GM12878 (cell line): ENCODE measurements at regions of chr4 and their contacts with region 1.

Region 1: GRCh38 chr4:169341490-169341889 is 70.7 kb upstream of the SH3RF1 start:
- DNase-seq: peak; percentile 62
- ATAC-seq: peak; percentile 87
- H3K4me3 ChIP-seq: no peak overlapping the region
- H3K27ac ChIP-seq: peak overlapping the region; percentile 23; the same call in 1 of the 2 replicates
- H3K4me1 ChIP-seq: peaks cover 13% of the 10 kb centered on the region
- H3K27me3 ChIP-seq: no peaks in the 10 kb centered on the region
- CTCF ChIP-seq: no peak
- EP300 ChIP-seq: peak in 1 of 2 experiments; percentile 36; a peak in 1 of 4 replicates
- POLR2A ChIP-seq: no peak
- RAD21 ChIP-seq: peak; percentile 35; the same call in 1 of the 2 replicates

Region 2: GRCh38 chr4:169362607-169363006 is 21.1 kb after region 1 on chr4:
- CTCF ChIA-PET with region 1: interaction called, 10 read pairs
- POLR2A ChIA-PET with region 1: interaction called, 3 read pairs
- RAD21 ChIA-PET with region 1: interaction called, 4 read pairs
- SMC1A ChIA-PET with region 1: interaction called, 4 read pairs
- in situ Hi-C with region 1: no loop called
- intact Hi-C with region 1: no loop called
- DNase-seq: no peak
- ATAC-seq: no peak; the same call in 2 of the 3 replicates
- H3K4me3 ChIP-seq: no peak overlapping the region
- H3K27ac ChIP-seq: no peak overlapping the region
- H3K4me1 ChIP-seq: no peaks in the 10 kb centered on the region
- H3K27me3 ChIP-seq: no peaks in the 10 kb centered on the region
- CTCF ChIP-seq: no peak
- EP300 ChIP-seq: no peak
- POLR2A ChIP-seq: no peak
- RAD21 ChIP-seq: no peak

Region 3: GRCh38 chr4:169398316-169398715 is 56.8 kb after region 1 on chr4:
- CTCF ChIA-PET with region 1: interaction called, 3 read pairs
- POLR2A ChIA-PET with region 1: no interaction called
- RAD21 ChIA-PET with region 1: interaction called, 9 read pairs
- SMC1A ChIA-PET with region 1: interaction called, 12 read pairs
- in situ Hi-C with region 1: no loop called
- intact Hi-C with region 1: no loop called
- DNase-seq: no peak
- ATAC-seq: peak; percentile 5; the same call in 2 of the 3 replicates
- H3K4me3 ChIP-seq: no peak overlapping the region
- H3K27ac ChIP-seq: no peak overlapping the region
- H3K4me1 ChIP-seq: peaks cover 13% of the 10 kb centered on the region
- H3K27me3 ChIP-seq: no peaks in the 10 kb centered on the region
- CTCF ChIP-seq: no peak
- EP300 ChIP-seq: no peak
- POLR2A ChIP-seq: no peak
- RAD21 ChIP-seq: no peak

Region 4: GRCh38 chr4:169410839-169411770 is 69.6 kb after region 1 on chr4:
- CTCF ChIA-PET with region 1: no interaction called
- POLR2A ChIA-PET with region 1: interaction called, 5 read pairs
- RAD21 ChIA-PET with region 1: interaction called, 7 read pairs
- SMC1A ChIA-PET with region 1: interaction called, 11 read pairs
- in situ Hi-C with region 1: no loop called
- intact Hi-C with region 1: no loop called
- DNase-seq: peak; percentile 93
- ATAC-seq: peak; percentile 97
- H3K4me3 ChIP-seq: 0 out of 2 replicates have a peak overlapping the region, but pooled peaks have one; percentile 46
- H3K27ac ChIP-seq: peak overlapping the region; percentile 63
- H3K4me1 ChIP-seq: peaks cover 22% of the 10 kb centered on the region
- H3K27me3 ChIP-seq: no peaks in the 10 kb centered on the region
- CTCF ChIP-seq: no peak
- EP300 ChIP-seq: peak; percentile 87 to 92
- POLR2A ChIP-seq: peak; percentile 61
- RAD21 ChIP-seq: peak; percentile 32; the same call in 1 of the 2 replicates